GM12878 (cell line): ENCODE measurements at regions of chr22 and their contacts with region 1.

Region 1: DNA sequence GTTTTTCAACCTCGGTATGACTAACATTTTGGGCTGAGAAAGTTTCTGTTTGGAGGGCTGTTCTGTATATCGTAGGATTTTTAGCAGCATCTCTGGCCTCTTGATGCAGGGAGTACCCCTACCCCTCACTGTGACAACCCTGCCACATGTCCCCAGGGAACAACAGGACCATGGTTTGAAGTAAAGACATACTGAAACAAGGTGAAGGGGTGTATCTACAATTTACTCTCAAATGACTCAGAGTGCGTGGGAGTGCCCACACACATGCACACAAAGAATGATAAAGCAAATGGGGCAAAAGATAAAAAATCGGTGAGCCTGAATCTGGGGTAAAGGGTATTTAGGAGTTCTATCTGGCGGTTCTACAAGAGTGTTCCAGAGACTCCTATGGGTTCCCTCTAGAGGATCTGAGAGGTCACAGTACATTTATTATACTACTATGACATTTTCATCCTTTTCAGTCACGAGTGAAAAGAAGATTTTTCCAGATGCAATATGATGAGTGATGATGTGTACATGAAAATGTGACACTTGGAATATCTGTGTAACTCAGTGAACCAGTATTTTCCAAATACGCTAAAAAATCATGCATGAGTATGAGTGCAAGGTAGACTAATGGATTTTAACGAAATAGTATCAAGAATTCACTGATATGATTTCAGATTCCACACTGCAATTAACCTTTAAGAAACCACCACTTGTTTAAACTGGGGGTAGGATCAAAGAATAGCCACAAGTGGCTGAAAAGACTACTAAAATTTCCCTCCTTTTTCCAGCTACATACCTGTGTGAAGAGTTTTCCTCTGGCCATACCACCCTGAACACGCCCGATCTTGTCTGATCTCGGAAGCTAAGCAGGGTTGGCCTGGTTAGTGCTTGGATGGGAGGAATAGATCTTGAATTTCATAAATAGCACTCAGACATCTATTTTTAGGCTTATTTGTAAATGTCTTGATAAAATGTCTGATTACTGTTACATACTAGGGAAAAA is 56.3 kb upstream of the YPEL1 start:
- DNase-seq: peak; percentile 62
- ATAC-seq: peak; percentile 96
- H3K4me3 ChIP-seq: no peak overlapping the region
- H3K27ac ChIP-seq: no peak overlapping the region
- H3K4me1 ChIP-seq: peaks cover 8% of the 10 kb centered on the region
- H3K27me3 ChIP-seq: no peaks in the 10 kb centered on the region
- CTCF ChIP-seq: 0 out of 6 replicates have a peak, but pooled peaks of 2 of the 3 experiments have one; percentile 7
- EP300 ChIP-seq: peak in 1 of 2 experiments; percentile 43; a peak in 1 of 4 replicates
- POLR2A ChIP-seq: no peak
- RAD21 ChIP-seq: 0 out of 2 replicates have a peak, but pooled peaks have one; percentile 1

Region 2: GRCh38 chr22:21587803-21588611 is 203.9 kb before region 1 on chr22:
- CTCF ChIA-PET with region 1: no interaction called
- POLR2A ChIA-PET with region 1: no interaction called
- RAD21 ChIA-PET with region 1: no interaction called
- SMC1A ChIA-PET with region 1: no interaction called
- in situ Hi-C with region 1: no loop called
- intact Hi-C with region 1: no loop called
- DNase-seq: peak; percentile 78
- ATAC-seq: peak; percentile 98
- H3K4me3 ChIP-seq: peak overlapping the region; percentile 41; the same call in 1 of the 2 replicates
- H3K27ac ChIP-seq: peak overlapping the region; percentile 49
- H3K4me1 ChIP-seq: peaks cover 26% of the 10 kb centered on the region
- H3K27me3 ChIP-seq: no peaks in the 10 kb centered on the region
- CTCF ChIP-seq: no peak
- EP300 ChIP-seq: peak in 1 of 2 experiments; percentile 80; a peak in 2 of 4 replicates
- POLR2A ChIP-seq: no peak
- RAD21 ChIP-seq: no peak

Region 3: GRCh38 chr22:21811982-21812381 is 20.1 kb after region 1 on chr22:
- CTCF ChIA-PET with region 1: no interaction called
- POLR2A ChIA-PET with region 1: no interaction called
- RAD21 ChIA-PET with region 1: no interaction called
- SMC1A ChIA-PET with region 1: no interaction called
- in situ Hi-C with region 1: no loop called
- intact Hi-C with region 1: no loop called
- DNase-seq: no peak
- ATAC-seq: no peak
- H3K4me3 ChIP-seq: no peak overlapping the region
- H3K27ac ChIP-seq: no peak overlapping the region
- H3K4me1 ChIP-seq: peaks cover 14% of the 10 kb centered on the region
- H3K27me3 ChIP-seq: no peaks in the 10 kb centered on the region
- CTCF ChIP-seq: no peak
- EP300 ChIP-seq: no peak
- POLR2A ChIP-seq: no peak
- RAD21 ChIP-seq: no peak

Region 4: GRCh38 chr22:21857481-21857914 is 65.6 kb after region 1 on chr22:
- CTCF ChIA-PET with region 1: no interaction called
- POLR2A ChIA-PET with region 1: interaction called, 10 read pairs
- RAD21 ChIA-PET with region 1: no interaction called
- SMC1A ChIA-PET with region 1: interaction called, 5 read pairs
- in situ Hi-C with region 1: no loop called
- intact Hi-C with region 1: no loop called
- DNase-seq: peak; percentile 45
- ATAC-seq: peak; percentile 91
- H3K4me3 ChIP-seq: peak overlapping the region; percentile 41; the same call in 1 of the 2 replicates
- H3K27ac ChIP-seq: peak overlapping the region; percentile 27; the same call in 1 of the 2 replicates
- H3K4me1 ChIP-seq: peaks cover 18% of the 10 kb centered on the region
- H3K27me3 ChIP-seq: no peaks in the 10 kb centered on the region
- CTCF ChIP-seq: no peak
- EP300 ChIP-seq: peak; percentile 49 to 63; a peak in 2 of 4 replicates
- POLR2A ChIP-seq: no peak
- RAD21 ChIP-seq: no peak